ENCODE measurements at regions of chr2 and their contacts with region 1.

Region 1: DNA sequence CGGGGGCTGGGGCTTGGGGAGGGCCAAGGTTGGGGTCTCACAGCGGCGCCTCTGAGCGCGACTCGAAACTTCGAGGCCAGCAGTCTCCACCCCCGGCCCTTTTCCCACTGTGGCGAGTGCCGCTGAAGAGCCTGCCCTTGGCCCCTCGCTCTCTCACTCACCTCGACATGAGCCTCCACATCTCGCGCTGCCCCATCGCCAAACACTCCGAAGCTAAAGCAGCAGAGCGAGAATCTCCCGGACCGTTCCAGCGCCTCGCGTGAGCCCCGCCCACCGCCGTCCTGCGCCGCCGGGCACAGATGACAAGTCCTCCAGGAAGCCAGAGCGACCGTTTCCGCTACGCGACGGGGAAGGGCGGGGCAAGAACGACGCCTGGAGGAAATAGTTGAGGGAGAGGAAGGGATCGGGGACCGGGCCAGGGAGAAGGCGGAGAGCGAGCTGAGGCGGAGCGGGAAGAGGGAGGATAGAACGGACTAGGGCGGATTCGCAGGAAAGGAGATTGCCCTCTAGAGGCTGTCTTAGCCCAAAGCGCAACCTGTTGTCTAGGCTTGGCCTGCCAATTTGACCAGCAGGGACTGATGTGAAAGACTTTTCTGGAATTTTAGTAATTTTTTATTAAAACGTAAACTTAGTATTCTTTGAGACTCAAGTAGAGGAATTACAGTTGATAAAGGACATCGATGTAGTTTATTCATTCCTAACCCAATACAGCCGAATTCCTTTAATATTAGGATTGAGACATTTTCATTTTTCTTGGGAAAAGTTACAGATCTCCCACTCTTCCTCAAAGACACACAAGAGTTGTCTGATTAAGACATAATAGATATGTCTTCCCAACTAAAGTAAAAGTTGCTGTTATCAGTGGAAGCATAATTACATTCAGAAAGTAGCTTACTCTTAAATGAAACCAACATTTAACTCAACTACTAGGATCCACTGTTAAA is at the start of gene HIBCH:
- DNase-seq: peak; percentile 99
- ATAC-seq: peak; percentile 99
- total RNA-seq, gene HIBCH: 21.2 TPM

Region 2: GRCh38 chr2:190180313-190181122 is 139.3 kb before region 1 on chr2:
- intact Hi-C with region 1: loop called (anchors 5 kb)
- DNase-seq: peak; percentile 82
- ATAC-seq: peak; percentile 89

Measured in Right ventricle myocardium inferior (tissue), 1 donor.